Activated naive CD8-positive, alpha-beta T cell treated with anti-CD3 and anti-CD28 coated beads, Interleukin-2, amount 10 ng/mL, durations not matched to agents 7 days and 5 days (primary cell): ENCODE measurements at regions of chr2 and their contacts with region 1.

Region 1: GRCh38 chr2:174634130-174635014 is 36.8 kb upstream of the WIPF1 start:
- DNase-seq: peak; percentile 65
- ATAC-seq: peak; percentile 82
- H3K4me3 Mint-ChIP-seq: peak overlapping the region; percentile 93
- H3K27ac Mint-ChIP-seq: peak overlapping the region; percentile 98
- H3K4me1 Mint-ChIP-seq: peaks cover 66% of the 10 kb centered on the region
- H3K27me3 Mint-ChIP-seq: no peaks in the 10 kb centered on the region

Region 2: DNA sequence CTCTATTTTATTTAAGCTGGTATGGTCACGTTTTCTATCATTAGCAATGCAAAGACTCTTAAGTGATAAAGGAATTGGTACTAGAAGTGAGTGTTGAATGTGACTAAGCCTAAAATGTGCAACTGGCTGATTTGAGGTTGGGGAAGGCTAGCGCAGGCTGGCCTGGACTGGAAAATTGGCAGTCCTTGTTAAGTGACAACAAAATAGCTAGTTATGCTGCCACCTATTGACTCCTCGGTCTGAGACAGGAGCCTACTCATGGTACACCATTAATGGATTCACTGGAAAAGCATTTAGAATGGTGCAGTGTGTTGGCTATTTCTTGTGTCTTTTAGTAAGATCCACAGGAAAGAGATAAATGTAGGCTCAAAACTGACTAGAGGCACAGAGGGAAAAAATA is 31.1 kb before region 1 on chr2:
- POLR2A ChIA-PET with region 1: interaction called, 214 read pairs
- DNase-seq: no peak
- ATAC-seq: peak; percentile 70
- H3K4me3 Mint-ChIP-seq: peak overlapping the region; percentile 12
- H3K27ac Mint-ChIP-seq: peak overlapping the region; percentile 57
- H3K4me1 Mint-ChIP-seq: peaks cover 79% of the 10 kb centered on the region
- H3K27me3 Mint-ChIP-seq: no peaks in the 10 kb centered on the region

Region 3: GRCh38 chr2:174615871-174616436 is 18.4 kb before region 1 on chr2:
- POLR2A ChIA-PET with region 1: interaction called, 38 read pairs
- DNase-seq: no peak
- ATAC-seq: peak; percentile 63
- H3K4me3 Mint-ChIP-seq: peak overlapping the region; percentile 32
- H3K27ac Mint-ChIP-seq: peak overlapping the region; percentile 83
- H3K4me1 Mint-ChIP-seq: peaks cover 74% of the 10 kb centered on the region
- H3K27me3 Mint-ChIP-seq: no peaks in the 10 kb centered on the region

Region 4: DNA sequence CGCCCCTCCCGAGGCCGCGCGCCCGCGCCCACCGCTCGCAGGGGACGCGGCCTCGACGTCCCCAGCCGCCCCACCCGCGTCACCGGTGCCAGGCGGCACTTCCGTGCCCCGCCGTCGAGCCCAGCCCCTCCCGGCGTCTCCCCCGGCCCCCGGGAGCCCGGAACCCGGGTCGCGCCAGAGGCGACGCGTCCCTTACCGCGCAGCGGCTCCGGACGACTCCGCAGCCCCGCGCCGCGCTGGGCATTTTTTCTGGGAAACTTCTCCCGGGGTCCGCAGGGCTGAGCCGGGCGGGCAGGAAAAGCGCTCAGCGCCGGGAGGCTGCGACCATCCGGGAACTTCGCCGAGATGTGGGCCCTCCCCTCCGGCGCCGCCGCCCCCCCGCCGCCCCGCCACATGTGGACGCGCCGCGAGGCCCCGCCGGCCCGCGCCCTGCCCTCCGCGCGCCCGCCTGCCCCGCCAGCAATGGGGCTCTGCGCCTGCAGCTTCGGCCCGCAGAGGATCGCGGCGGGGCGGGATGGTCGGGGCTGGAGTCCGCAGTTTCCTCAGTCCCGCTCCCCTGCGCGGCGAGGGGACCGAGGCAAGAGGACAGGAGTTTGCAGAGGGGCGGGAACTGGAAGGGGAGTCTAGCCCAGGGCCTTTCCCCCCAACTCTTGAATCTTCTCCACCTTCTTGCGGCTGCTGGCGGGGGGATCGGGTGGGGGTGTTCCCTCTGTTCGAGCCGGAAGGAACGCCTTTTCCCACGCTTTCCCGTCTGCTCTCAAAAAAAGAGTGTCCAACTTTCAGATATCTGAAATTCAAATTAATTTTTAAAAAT is 48.4 kb after region 1 on chr2:
- POLR2A ChIA-PET with region 1: interaction called, 74 read pairs
- DNase-seq: peak; percentile 80
- ATAC-seq: peak; percentile 70
- H3K4me3 Mint-ChIP-seq: peak overlapping the region; percentile 91
- H3K27ac Mint-ChIP-seq: peak overlapping the region; percentile 93
- H3K4me1 Mint-ChIP-seq: peaks cover 56% of the 10 kb centered on the region
- H3K27me3 Mint-ChIP-seq: no peaks in the 10 kb centered on the region